HEK293 (cell line): ENCODE measurements at regions of chr2 and their contacts with region 1.

Region 1: GRCh38 chr2:119218478-119219064 is 5.1 kb upstream of the STEAP3 start:
- H3K4me3 ChIP-seq: no peak overlapping the region
- H3K27ac ChIP-seq: peak overlapping the region; percentile 11; the same call in 1 of the 2 replicates
- H3K4me1 ChIP-seq: peaks cover 13% of the 10 kb centered on the region
- CTCF ChIP-seq: peak; percentile 92

Region 2: DNA sequence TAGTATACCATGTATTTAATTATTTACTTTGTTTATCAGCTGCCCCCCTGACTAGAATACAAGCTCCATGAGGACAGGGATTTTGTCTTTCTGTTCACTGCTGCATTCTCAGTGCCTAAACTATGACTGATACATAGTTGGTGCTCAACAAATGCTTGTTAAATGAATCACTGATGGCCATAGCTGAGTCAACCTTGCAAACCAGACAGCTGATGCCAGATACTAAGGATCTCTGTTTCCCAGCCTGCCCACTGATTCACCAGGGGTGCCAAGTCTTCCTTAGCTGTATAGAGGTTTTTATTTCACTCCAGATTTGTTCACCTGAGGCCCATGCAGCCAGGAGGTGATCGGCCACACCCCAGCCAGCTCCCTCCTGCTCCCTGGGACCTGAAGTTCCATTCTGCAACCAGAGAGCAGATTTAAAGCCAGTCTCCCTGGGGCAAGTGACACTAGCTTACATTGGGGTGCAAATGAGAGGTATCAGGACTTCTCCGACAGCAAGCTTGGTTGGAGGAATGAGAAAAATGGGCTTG is 152.2 kb before region 1 on chr2:
- CTCF ChIA-PET with region 1: no interaction called
- POLR2A ChIA-PET with region 1: no interaction called
- H3K4me3 ChIP-seq: no peak overlapping the region
- H3K27ac ChIP-seq: no peak overlapping the region
- H3K4me1 ChIP-seq: no peaks in the 10 kb centered on the region
- CTCF ChIP-seq: no peak

Region 3: DNA sequence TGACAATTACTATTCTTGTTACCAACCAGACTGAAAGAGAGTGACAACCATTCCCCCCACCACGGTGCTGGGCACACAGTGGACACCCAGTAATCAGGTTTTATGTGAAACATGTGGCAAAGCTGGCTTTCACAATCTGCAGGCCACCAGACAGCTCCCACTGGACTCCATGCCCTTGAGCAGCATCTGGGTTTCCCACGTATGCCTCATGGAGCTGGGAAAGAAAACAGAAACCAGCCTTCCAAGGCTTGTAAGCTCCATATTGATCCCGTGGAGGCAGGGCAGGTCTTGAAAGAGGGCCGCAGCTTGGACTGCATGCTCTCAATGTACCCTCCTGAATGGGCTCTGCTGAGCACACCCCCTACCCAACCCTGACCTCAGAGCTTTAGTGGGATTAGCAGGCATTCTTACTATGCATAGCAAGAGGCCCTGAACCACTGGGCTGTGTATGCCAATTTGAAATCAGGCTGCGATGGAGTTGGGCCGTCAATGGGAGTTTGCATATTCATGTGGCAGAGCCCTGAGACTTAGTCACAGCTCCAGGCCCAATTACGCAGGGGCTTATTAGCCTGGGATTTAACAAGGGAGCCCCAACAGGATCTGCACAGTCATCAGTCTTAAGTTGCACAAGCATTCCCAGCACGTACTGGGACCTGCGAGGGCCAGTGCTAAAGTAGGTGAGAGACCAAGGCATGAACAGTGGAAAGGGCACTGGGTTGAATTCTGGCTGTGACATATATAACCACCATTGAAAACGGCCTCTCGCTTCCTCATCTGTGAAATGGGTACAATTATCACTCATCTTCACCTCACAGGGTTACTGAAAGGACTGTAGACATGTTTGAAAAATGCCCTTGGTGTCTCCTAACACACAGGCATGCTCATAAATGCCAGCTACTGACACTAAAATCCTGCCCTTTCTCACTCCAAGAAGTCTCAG is 70.5 kb before region 1 on chr2:
- CTCF ChIA-PET with region 1: no interaction called
- POLR2A ChIA-PET with region 1: no interaction called
- H3K4me3 ChIP-seq: no peak overlapping the region
- H3K27ac ChIP-seq: no peak overlapping the region
- H3K4me1 ChIP-seq: no peaks in the 10 kb centered on the region
- CTCF ChIP-seq: no peak

Region 4: DNA sequence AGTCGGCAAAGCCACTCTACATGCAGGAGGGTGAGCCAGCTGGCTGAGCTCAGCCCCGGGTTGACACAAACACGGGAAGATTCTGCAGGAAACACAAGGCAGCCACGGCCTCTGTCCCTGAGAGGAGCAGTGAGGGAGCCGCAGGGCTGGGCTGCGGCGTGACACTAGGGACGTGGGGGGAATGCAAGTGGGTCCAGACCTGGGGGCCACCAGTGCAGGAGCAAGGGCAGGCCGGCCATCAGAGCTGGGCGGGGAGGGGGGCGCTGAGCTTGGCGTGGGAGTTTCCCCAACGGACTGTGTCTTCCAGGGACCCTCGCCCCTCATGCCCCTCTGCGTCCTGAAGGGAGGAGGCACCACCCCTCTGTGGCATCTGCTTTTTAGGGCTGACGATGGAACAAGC is 48.1 kb before region 1 on chr2:
- CTCF ChIA-PET with region 1: no interaction called
- POLR2A ChIA-PET with region 1: no interaction called
- H3K4me3 ChIP-seq: no peak overlapping the region
- H3K27ac ChIP-seq: no peak overlapping the region
- H3K4me1 ChIP-seq: no peaks in the 10 kb centered on the region
- CTCF ChIP-seq: no peak

Region 5: DNA sequence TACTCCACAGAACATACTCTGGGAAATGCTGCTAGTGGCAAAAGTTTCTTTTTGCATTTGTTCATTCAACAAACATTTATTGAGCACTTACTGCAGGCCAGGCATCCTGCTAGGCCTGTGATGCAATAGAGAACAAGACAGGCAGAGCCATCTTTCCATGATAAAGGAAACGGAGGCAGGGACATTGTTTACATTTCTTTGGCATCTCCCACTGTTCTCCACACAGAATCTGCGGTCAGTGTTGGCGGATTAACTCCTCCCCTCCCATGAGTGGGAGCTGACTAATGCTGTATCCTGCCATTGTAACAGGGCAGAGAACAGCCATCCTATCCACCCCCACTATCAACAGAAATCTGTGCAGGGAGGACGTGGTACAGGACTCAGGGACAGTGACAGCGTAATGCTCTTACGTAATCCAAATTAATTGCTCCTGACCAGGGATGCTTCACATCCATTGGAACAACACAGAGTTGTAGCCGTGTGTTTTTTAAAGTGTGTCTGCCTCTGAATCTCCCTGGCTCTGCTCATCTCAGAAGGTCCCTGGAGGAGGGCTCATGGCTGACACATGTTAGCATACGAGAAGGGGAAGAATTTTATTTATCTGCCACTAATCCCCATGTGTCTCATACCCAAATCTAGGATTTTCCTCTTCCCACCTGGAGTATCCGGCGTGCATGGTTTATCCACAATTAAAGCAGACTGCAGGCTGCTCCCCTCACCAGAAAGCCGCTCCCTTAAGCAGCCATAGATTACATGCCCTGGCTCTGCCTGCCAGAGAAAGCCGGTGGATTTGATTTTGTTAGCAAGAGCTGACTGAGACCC is 37.4 kb after region 1 on chr2:
- CTCF ChIA-PET with region 1: interaction called, 17 read pairs
- POLR2A ChIA-PET with region 1: interaction called, 5 read pairs
- H3K4me3 ChIP-seq: no peak overlapping the region
- H3K27ac ChIP-seq: no peak overlapping the region
- H3K4me1 ChIP-seq: peaks cover 14% of the 10 kb centered on the region
- CTCF ChIP-seq: no peak

Region 6: DNA sequence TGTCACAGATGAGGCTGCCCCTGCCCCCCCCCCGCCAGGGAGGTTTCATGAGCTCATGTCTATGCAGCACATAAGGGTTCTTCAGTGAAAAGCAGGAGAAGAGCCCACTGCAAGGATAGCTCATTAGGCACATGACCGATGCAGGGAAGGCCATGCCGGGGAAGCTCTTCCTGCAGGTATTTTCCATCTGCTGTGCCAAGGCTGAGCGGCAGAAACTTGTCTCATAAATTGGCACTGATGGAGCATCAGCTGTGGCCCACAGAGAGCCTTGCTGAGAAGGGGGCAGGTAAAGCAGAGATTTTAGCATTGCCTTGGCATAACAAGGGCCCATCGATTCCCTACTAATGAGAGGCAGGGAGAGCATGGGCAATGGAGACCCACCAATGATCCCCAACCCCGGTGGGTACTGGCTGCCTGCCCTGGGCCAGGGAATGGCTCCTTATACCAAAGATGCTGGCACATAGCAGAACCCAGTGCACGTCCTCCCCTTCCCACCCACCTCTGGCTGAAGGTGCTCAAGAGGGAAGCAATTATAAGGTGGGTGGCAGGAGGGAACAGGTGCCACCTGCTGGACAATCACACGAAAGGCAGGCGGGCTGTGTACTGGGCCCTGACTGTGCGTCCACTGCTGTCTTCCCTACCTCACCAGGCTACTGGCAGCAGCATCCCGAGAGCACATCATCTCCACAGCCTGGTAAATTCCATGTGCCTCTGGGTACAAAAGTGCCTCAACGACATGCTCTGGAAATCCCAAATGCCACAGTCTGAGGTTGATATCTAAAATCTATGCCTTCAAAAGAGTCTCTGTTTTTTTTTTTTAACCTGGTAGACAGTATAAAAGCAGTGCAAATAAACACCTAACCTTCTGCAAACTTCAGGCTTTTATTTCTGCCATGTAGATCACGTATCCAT is 46.5 kb after region 1 on chr2:
- CTCF ChIA-PET with region 1: interaction called, 53 read pairs
- POLR2A ChIA-PET with region 1: interaction called, 5 read pairs
- H3K4me3 ChIP-seq: no peak overlapping the region
- H3K27ac ChIP-seq: no peak overlapping the region
- H3K4me1 ChIP-seq: no peaks in the 10 kb centered on the region
- CTCF ChIP-seq: peak; percentile 78

Region 7: DNA sequence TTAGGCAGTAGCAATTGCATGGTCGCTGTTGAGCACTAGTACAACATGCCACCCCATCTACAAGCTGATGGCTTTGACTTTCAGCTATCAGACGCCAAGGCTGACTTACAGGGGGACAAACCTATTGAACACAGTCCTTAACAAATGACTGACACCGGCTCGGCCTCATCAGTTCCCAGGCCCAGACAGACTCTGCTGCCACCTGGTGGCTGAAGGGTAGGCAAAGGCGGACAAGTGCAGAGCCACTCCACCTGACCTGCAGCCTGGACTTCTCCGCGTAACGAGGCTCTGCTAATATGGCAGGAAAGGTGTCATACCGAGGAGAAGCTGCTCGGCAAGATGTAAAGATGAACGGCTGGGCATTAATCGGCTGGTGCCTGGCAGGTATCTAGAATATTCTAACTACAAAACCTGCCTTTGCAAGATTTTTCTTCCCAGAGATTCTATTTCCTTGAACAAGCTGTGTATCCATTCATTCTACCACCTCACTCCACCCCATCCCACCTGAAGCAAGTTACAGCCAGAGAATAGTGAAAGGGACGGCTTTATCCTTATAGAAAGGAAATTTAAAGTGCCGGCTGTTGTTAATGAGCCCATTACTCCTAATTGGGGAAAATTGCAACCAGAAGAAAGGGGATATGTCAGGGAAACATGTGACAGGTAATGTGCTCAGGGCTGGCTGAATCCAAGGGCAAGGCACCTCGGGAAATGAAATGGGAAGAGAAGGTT is 72.5 kb after region 1 on chr2:
- CTCF ChIA-PET with region 1: interaction called, 33 read pairs
- POLR2A ChIA-PET with region 1: no interaction called
- H3K4me3 ChIP-seq: no peak overlapping the region
- H3K27ac ChIP-seq: no peak overlapping the region
- H3K4me1 ChIP-seq: 0 out of 2 replicates have a peak, but pooled peaks cover 3% of the 10 kb centered on the region
- CTCF ChIP-seq: no peak

Region 8: GRCh38 chr2:119311356-119311755 is 92.8 kb after region 1 on chr2:
- CTCF ChIA-PET with region 1: interaction called, 28 read pairs
- POLR2A ChIA-PET with region 1: no interaction called
- H3K4me3 ChIP-seq: no peak overlapping the region
- H3K27ac ChIP-seq: no peak overlapping the region
- H3K4me1 ChIP-seq: no peaks in the 10 kb centered on the region
- CTCF ChIP-seq: no peak

Region 9: DNA sequence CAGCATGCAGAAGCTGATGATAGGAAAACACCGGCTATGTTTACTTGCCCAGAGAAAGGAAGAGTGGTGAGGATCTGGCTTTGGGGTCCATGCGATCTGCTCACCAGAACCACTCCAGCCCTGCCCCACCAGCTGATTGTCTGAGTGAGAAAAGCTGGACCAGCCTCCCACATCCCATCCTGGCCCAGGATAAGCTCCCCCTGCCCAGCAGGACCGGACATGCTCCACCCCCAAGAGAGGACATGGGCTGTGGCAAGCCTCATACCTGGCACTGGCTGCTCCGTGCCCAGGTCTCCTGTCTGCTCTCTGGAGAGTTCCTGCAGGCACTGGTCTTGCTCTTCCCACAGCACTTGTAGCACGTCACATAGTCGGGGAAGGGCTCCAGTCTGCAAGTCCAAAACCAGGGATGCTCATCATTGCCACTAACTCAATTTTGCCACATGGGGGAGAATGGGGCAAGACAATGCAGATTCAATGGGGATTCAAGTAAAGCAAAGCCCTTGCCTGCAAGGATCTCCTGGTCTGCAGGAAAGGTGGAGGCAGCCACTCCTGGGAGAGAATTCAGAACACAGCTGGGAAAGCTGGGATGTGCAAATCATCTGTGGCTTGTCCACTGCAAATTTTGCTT is 275.7 kb after region 1 on chr2:
- CTCF ChIA-PET with region 1: no interaction called
- POLR2A ChIA-PET with region 1: no interaction called
- H3K4me3 ChIP-seq: no peak overlapping the region
- H3K27ac ChIP-seq: no peak overlapping the region
- H3K4me1 ChIP-seq: no peaks in the 10 kb centered on the region
- CTCF ChIP-seq: no peak